Posterior vena cava (tissue), 2 donors: ENCODE measurements at regions of chr9 and their contacts with region 1.

Region 1: DNA sequence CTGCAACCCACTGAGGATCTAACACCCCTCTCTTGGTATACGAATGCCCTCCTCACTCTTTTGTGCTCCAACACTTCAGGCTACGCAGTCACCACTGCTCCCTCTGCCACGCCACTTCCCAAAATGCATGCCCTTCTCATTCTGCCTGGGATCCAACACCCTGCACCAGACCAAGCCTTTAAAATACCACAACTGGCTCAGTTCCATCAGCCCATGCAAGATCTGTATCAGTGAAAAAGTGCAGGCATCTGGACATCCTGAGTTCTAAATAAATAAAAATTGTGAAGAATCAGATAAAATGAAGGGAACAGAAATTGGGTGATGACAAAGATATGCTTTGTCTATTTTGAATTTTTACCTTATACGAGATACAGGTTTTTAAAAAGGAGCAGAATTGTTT is 2.7 kb downstream of the NDUFB6 start:
- DNase-seq: no peak

Region 2: DNA sequence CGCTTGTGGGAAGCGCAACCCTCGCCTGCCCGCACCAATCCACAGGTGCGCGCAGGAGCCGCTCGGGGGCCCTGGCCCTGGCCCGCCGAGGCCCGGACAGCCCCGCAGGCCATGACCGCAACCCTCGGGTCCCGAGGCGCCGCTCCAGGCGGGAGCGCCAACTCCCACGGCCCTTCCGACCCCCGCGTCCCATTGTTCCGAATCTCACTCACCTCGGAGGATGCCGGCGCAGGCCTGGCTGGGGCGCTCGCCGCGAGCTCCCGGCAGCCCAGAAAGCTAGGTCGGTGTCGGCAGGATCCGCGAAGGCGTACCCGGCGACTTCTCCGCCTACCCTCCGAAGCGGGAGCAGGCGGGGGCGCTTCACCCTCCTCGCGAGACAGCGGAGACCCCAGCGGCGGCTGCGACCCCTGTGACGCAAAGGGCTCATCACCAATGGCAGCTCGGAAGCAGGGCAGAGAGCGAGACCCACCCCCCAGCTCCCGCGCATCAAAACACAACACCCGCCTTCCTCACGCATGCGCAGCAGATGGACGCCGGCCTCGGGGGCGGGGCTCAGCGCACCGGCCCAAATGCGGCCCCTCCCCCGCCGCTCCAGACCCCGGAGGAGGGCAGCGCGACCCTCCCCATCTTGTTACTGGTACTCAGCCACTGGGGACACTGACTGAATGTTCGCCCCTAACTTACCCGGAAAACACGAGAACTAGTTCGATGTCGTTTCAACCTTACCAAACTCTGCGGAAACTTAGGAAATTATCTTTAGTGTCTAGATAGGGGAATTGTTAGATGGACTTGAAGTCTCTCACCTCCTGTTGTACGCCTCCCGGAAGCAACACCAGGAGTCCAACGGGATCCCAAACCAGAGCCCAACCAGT is 19.5 kb before region 1 on chr9:
- intact Hi-C with region 1: loop called in 1 of 2 experiments (anchors 1 kb)
- DNase-seq: peak; percentile 97

Region 3: DNA sequence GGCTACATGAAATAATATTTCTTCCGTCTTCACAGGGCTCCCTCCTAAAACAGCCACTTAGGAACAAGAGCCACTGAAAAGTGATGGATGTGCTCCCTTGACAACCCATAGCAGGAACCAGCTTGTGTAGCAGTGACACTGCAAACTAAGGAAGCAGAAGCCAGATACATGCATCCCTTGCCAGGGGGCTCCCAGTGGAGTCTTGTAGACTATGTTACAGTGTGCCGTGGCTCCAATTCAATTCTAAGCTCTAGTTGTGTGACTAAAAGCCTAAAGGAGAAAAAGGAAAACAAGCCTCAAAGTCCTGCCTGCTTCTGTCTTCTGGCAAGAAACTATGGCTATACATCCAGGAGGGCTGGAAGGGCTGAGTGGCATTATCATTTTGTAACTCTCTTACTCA is 77.4 kb after region 1 on chr9:
- intact Hi-C with region 1: no loop called
- DNase-seq: no peak

Region 4: DNA sequence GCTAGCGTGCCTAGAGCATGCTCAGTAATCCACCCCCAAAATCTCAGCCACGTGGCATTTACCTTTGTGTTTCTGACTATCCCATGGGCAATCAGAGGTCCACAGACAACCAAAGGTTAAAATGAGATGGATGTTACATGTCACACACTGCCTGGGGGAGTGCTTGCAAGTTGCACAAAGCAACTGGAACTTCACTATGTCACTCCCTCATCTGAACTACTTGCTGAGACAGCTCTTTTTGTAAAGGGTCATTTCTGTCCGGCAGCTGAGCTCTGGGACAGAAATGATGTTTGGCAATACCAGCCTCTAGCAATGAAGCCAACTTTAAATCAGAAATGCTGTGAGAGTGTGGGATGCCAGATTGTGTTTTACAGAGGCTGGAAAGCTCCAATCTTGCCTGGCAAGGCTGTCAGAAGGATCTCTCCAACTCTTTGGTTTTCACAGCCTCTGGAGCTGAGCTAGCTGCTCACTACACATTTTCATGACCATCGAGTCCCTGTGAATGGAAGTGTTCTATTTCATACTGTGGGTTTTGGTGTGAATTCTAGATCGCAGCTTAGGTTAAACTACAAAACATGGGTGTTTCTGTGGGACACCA is 146.8 kb after region 1 on chr9:
- intact Hi-C with region 1: no loop called
- DNase-seq: no peak